Right ventricle myocardium inferior (tissue), 1 donor: ENCODE measurements at regions of chr6 and their contacts with region 1.

Region 1: GRCh38 chr6:43013843-43014433 is at the starts of genes KLHDC3 and MEA1:
- DNase-seq: peak; percentile 99
- ATAC-seq: peak; percentile 95
- total RNA-seq, gene KLHDC3: 145 TPM
- total RNA-seq, gene MEA1: 32.1 TPM

Region 2: GRCh38 chr6:42984001-42984923 is 29.7 kb before region 1 on chr6 and contains the start of gene PPP2R5D:
- intact Hi-C with region 1: loop called (anchors 1 kb)
- DNase-seq: peak; percentile 99
- ATAC-seq: peak; percentile 96
- total RNA-seq, gene PPP2R5D: 34.2 TPM

Region 3: GRCh38 chr6:43035495-43036194 is 21.7 kb after region 1 on chr6:
- intact Hi-C with region 1: loop called (anchors 1 kb)
- DNase-seq: no peak
- ATAC-seq: peak; percentile 93

Region 4: GRCh38 chr6:43059168-43060033 is 45.5 kb after region 1 on chr6 and contains the starts of genes KLC4 and MRPL2:
- intact Hi-C with region 1: loop called (anchors 1 kb)
- DNase-seq: peak; percentile 98
- ATAC-seq: peak; percentile 98
- total RNA-seq, gene KLC4: 30.0 TPM
- total RNA-seq, gene MRPL2: 99.7 TPM

Region 5: DNA sequence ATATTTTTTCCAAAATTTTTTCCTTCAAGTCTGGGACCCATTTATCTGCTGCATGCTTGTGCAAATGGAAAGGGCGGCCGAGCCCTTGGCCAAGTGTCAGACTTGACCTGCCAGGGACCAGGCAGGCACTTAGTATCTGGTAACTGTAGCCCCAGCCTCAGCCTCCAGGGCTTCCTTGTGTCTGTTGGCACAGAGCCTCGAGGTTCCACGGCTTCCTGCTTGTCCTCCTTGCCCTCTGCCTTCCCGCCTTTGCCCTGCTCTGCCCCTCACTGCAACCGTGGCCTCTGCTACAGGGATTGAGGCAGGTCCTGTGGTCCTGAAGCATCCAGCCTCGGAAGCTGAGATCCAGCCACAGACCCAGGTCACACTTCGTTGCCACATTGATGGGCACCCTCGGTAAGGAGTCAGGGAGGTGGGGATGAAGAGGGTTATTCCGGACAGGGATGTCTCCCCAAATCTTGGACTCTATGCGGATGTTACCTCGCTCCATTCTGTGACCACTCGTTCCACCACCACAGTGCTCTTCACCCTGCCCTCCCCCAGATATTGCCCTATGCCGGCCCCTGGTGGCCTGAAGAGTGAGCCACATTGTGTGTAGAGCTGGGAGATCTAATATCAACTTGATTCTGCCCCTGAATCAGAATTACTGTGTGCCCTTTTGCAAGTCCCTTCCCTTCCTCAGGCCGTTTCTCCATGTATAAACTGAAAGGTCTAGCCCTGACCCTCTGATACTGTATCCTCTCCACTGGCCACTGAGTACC is 115.7 kb after region 1 on chr6:
- intact Hi-C with region 1: loop called (anchors 5 kb)
- DNase-seq: no peak
- ATAC-seq: peak; percentile 70

Region 6: DNA sequence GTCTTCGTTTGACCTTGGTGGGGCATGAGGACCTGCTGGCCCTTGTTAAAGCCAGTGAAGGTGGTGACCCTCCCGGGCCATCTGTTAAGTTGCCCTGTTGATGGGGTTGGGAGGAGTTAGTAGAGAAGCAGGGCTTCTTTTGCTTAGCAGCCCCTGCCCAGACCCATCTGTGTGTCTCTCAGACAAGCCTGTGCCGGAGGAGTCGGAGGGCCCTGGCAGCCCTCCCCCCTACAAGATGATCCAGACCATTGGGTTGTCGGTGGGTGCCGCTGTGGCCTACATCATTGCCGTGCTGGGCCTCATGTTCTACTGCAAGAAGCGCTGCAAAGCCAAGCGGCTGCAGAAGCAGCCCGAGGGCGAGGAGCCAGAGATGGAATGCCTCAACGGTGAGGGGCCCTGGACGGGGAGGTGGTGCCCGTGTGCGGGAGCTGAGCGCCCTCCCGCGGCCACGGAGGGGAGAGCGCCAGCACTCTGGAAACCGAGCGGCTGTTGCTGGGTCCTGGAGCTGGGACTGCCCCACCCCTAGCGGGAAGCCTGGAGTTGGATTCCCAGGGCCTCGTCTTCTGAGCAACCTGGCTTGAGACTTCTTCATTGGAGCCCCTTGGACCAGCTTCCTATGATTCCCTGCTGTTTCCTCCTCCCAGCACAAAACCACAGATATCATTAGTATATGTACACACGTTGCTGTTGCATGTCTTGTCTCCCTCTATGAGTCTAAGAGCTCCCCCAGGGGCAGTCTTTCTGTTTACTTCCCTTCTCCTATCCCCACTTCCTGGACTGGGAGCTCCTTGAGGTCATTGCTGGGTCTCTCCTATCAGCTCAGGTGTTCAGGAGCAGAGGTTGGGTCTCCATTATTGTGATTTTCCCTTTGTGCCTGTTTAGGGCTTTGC is 129.5 kb after region 1 on chr6:
- intact Hi-C with region 1: loop called (anchors 1 kb)
- DNase-seq: peak; percentile 90
- ATAC-seq: peak; percentile 97